SK-N-SH (cell line): ENCODE measurements at regions of chr17 and their contacts with region 1.

Region 1: GRCh38 chr17:40086150-40087044 is 14.0 kb downstream of the NR1D1 start:
- DNase-seq: peak; percentile 92
- H3K4me3 ChIP-seq: peak overlapping the region in 1 of 2 experiments; percentile 32; a peak in 1 of 4 replicates
- H3K27ac ChIP-seq: no peak overlapping the region
- H3K4me1 ChIP-seq: no peaks in the 10 kb centered on the region
- H3K27me3 ChIP-seq: no peaks in the 10 kb centered on the region
- CTCF ChIP-seq: peak; percentile 86
- EP300 ChIP-seq: no peak
- RAD21 ChIP-seq: peak; percentile 85

Region 2: DNA sequence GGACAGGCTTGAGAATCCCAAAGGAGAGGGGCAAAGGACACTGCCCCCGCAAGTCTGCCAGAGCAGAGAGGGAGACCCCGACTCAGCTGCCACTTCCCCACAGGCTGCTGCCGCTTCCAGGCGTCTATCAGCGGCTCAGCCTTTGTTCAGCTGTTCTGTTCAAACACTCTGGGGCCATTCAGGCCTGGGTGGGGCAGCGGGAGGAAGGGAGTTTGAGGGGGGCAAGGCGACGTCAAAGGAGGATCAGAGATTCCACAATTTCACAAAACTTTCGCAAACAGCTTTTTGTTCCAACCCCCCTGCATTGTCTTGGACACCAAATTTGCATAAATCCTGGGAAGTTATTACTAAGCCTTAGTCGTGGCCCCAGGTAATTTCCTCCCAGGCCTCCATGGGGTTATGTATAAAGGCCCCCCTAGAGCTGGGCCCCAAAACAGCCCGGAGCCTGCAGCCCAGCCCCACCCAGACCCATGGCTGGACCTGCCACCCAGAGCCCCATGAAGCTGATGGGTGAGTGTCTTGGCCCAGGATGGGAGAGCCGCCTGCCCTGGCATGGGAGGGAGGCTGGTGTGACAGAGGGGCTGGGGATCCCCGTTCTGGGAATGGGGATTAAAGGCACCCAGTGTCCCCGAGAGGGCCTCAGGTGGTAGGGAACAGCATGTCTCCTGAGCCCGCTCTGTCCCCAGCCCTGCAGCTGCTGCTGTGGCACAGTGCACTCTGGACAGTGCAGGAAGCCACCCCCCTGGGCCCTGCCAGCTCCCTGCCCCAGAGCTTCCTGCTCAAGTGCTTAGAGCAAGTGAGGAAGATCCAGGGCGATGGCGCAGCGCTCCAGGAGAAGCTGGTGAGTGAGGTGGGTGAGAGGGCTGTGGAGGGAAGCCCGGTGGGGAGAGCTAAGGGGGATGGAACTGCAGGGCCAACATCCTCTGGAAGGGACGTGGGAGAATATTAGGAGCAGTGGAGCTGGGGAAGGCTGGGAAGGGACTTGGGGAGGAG is 71.1 kb before region 1 on chr17 and contains the start of gene CSF3:
- CTCF ChIA-PET with region 1: interaction called, 27 read pairs
- POLR2A ChIA-PET with region 1: no interaction called
- DNase-seq: peak; percentile 19
- H3K4me3 ChIP-seq: no peak within 1 kb of the TSS
- H3K27ac ChIP-seq: no peak within 1 kb of the TSS
- H3K4me1 ChIP-seq: no peaks in the 10 kb centered on the region; a peak in 1 of 4 replicates
- H3K27me3 ChIP-seq: no peaks in the 10 kb centered on the region
- CTCF ChIP-seq: no peak
- EP300 ChIP-seq: no peak
- RAD21 ChIP-seq: no peak
- polyA plus RNA-seq, gene CSF3: not detected in 2 replicates

Region 3: DNA sequence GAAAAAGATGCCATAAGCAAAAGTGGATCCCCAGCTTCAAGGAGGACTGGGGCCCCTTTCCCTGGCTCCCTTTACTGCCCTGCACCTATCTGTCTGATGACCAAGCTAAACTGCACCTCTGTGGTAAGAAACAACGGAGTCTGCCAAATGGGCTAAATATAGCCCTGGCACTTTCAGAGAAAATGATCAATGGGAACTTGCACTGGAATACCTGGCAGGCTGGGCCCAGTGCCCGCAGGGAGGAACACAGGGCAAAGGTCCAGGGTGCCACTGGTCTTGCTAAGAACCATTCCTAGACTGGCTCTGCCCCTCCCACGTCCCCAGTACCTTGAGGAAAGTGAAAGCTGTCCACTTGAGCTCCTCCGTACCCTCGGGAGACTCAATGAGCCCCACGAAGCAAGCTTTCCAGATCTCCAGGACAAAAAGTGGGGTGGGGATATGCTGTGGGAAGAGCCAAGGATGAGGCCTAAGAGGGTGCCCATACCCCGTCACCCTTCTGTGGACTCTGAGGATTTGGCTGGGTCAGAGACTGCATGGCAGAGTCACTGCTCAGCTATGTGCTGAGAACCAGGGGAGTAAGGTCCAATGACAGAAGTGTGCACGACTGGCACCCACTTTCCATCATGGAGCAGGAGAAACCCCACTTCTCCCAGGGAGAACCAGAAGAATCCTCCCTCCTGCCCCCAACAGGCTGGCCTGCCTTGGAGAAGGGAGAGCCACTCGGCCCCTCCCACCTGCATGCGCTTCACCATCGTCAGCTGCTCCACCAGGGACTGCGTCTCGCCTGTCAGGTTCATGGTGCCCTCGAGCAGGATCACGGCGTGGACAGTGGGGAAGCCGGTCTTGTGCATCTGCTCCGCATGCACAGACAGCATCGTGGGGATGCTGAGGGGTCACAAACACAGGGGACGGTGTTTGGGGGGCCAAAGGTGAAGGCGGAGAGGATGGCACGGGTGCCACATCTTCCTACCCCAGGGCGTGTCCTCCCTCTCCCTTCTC is 53.8 kb before region 1 on chr17:
- CTCF ChIA-PET with region 1: interaction called, 24 read pairs
- POLR2A ChIA-PET with region 1: interaction called, 3 read pairs
- DNase-seq: no peak
- H3K4me3 ChIP-seq: no peak overlapping the region
- H3K27ac ChIP-seq: no peak overlapping the region
- H3K4me1 ChIP-seq: no peaks in the 10 kb centered on the region; a peak in 1 of 4 replicates
- H3K27me3 ChIP-seq: no peaks in the 10 kb centered on the region
- CTCF ChIP-seq: no peak
- EP300 ChIP-seq: no peak
- RAD21 ChIP-seq: no peak

Region 4: GRCh38 chr17:40038882-40039513 is 47.4 kb before region 1 on chr17:
- CTCF ChIA-PET with region 1: interaction called, 24 read pairs
- POLR2A ChIA-PET with region 1: interaction called, 3 read pairs
- DNase-seq: peak; percentile 80
- H3K4me3 ChIP-seq: no peak overlapping the region
- H3K27ac ChIP-seq: peak overlapping the region; percentile 34 to 64
- H3K4me1 ChIP-seq: peaks cover 0 to 6% of the 10 kb centered on the region in 2 experiments; a peak in 1 of 4 replicates
- H3K27me3 ChIP-seq: no peaks in the 10 kb centered on the region
- CTCF ChIP-seq: peak; percentile 83
- EP300 ChIP-seq: no peak
- RAD21 ChIP-seq: peak; percentile 64

Region 5: DNA sequence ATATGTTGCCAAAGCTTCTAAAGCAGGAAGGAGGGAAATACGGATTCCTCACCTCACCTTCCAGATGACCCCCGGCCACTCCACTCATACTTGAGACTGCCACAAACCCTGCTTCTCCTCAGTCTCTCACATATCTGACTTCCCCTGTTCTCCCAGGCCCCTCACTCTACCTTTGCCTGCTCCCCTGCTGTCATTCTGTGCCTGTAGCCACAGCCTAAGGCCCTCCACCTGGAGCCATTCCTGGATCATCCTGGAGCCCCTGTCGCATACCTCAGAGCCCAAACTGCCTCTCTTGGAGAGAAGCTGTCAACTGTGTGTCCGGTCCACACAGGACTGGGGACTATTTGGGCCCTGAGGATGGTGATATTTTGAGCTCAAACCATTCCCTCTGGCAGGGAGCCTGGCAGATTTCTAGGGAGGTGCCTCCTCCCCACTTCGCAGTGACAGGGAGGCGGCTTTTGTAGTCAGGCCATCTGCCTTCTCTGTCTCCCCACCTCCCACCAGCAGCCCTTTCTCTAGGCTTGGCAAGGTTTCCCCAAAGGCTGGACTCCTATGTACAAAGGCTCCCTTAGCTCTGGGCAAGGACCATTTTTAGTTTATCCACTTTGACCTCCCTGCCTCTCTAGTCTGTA is 29.9 kb before region 1 on chr17:
- CTCF ChIA-PET with region 1: interaction called, 100 read pairs
- POLR2A ChIA-PET with region 1: interaction called, 4 read pairs
- DNase-seq: no peak
- H3K4me3 ChIP-seq: no peak overlapping the region
- H3K27ac ChIP-seq: no peak overlapping the region
- H3K4me1 ChIP-seq: peaks cover 0 to 11% of the 10 kb centered on the region in 2 experiments; a peak in 2 of 4 replicates
- H3K27me3 ChIP-seq: no peaks in the 10 kb centered on the region
- CTCF ChIP-seq: no peak
- EP300 ChIP-seq: no peak
- RAD21 ChIP-seq: no peak

Region 6: GRCh38 chr17:40062329-40063186 is 23.8 kb before region 1 on chr17 and contains the start of gene THRA:
- CTCF ChIA-PET with region 1: interaction called, 100 read pairs
- POLR2A ChIA-PET with region 1: no interaction called
- DNase-seq: peak; percentile 95
- H3K4me3 ChIP-seq: peak within 1 kb of the TSS; percentile 77 to 94
- H3K27ac ChIP-seq: peak within 1 kb of the TSS in 1 of 2 experiments; percentile 81; a peak in 2 of 4 replicates
- H3K4me1 ChIP-seq: peaks cover 13 to 32% of the 10 kb centered on the region in 2 experiments; a peak in 3 of 4 replicates
- H3K27me3 ChIP-seq: no peaks in the 10 kb centered on the region
- CTCF ChIP-seq: no peak
- EP300 ChIP-seq: no peak
- RAD21 ChIP-seq: peak; percentile 38; the same call in 1 of the 2 replicates
- polyA plus RNA-seq, gene THRA: 20.1 and 23.1 TPM in 2 replicates

Region 7: GRCh38 chr17:40069751-40070708 is 16.4 kb before region 1 on chr17:
- CTCF ChIA-PET with region 1: interaction called, 100 read pairs
- POLR2A ChIA-PET with region 1: no interaction called
- DNase-seq: peak; percentile 52
- H3K4me3 ChIP-seq: peak overlapping the region in 1 of 2 experiments; percentile 41; a peak in 2 of 4 replicates
- H3K27ac ChIP-seq: peak overlapping the region; percentile 72 to 93
- H3K4me1 ChIP-seq: peaks cover 55 to 77% of the 10 kb centered on the region in 2 experiments; a peak in 3 of 4 replicates
- H3K27me3 ChIP-seq: no peaks in the 10 kb centered on the region
- CTCF ChIP-seq: peak; percentile 45
- EP300 ChIP-seq: no peak
- RAD21 ChIP-seq: no peak